Testis (tissue), 5 donors: ENCODE measurements at regions of chr6 and their contacts with region 1.

Region 1: GRCh38 chr6:139895205-139895793 is 520.9 kb upstream of the CITED2 start:
- DNase-seq: no peak
- H3K4me3 ChIP-seq: no peak overlapping the region
- H3K27ac ChIP-seq: no peak overlapping the region
- H3K4me1 ChIP-seq: no peaks in the 10 kb centered on the region
- H3K27me3 ChIP-seq: no peaks in the 10 kb centered on the region
- CTCF ChIP-seq: peak in 1 of 3 experiments; percentile 17
- POLR2A ChIP-seq: no peak

Region 2: GRCh38 chr6:139940741-139941729 is 45.7 kb after region 1 on chr6:
- intact Hi-C with region 1: loop called (anchors 10 kb)
- DNase-seq: no peak
- H3K4me3 ChIP-seq: no peak overlapping the region
- H3K27ac ChIP-seq: peak overlapping the region in 1 of 2 donors; percentile 6
- H3K4me1 ChIP-seq: peaks cover 25% of the 10 kb centered on the region
- H3K27me3 ChIP-seq: no peaks in the 10 kb centered on the region
- CTCF ChIP-seq: no peak
- POLR2A ChIP-seq: no peak